ENCODE measurements at regions of chr15 and their contacts with region 1.

Region 1: DNA sequence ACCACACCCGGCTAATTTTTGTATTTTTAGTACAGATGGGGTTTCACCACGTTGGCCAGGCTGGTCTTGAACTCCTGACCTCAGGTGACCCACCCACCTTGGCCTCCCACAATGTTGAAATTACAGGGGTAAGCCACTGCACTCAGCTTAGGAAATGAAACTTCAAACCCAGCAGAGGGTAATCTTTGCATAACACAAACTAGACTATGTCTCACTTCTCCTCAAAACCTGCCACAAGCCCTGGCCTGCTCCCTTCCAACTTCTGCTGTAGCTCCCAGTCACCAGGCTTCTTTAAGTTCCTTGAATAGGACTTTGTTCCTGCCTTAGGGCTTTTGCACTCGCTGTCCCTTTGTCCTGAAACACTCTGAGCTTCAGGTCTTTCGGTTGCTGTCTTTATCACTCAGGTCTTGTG is 39.2 kb upstream of the SEMA4B start:
- DNase-seq: no peak

Region 2: DNA sequence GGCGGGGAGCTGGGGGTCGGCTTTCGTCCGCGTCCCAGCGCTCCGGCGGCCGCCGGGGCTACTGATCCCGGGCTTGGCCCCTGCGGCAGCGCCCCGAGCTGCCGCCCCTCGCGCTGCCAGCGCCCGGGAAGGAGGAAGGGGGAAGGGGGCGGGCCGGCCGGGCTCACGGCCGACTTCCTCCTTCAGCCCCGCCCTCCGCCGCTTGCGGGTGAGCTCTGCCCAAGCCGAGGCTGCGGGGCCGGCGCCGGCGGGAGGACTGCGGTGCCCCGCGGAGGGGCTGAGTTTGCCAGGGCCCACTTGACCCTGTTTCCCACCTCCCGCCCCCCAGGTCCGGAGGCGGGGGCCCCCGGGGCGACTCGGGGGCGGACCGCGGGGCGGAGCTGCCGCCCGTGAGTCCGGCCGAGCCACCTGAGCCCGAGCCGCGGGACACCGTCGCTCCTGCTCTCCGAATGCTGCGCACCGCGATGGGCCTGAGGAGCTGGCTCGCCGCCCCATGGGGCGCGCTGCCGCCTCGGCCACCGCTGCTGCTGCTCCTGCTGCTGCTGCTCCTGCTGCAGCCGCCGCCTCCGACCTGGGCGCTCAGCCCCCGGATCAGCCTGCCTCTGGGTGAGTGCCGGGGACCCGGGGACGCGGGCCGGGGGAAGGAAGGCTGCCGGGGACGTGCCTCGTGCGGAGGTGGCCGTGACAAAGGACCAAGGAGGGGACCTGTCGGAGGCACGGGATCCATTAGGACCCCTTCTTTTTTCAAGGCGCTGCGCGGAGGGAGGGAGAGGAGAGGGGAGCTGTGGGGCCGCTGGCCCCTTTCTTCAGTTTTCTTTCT is 39.4 kb after region 1 on chr15 and contains the start of gene SEMA4B:
- intact Hi-C with region 1: loop called in 1 of 2 experiments (anchors 5 kb)
- DNase-seq: peak; percentile 90
- total RNA-seq, gene SEMA4B: 21.1 to 22.7 TPM